WTC11 (cell line): ENCODE measurements at regions of chr2 and their contacts with region 1.

Region 1: DNA sequence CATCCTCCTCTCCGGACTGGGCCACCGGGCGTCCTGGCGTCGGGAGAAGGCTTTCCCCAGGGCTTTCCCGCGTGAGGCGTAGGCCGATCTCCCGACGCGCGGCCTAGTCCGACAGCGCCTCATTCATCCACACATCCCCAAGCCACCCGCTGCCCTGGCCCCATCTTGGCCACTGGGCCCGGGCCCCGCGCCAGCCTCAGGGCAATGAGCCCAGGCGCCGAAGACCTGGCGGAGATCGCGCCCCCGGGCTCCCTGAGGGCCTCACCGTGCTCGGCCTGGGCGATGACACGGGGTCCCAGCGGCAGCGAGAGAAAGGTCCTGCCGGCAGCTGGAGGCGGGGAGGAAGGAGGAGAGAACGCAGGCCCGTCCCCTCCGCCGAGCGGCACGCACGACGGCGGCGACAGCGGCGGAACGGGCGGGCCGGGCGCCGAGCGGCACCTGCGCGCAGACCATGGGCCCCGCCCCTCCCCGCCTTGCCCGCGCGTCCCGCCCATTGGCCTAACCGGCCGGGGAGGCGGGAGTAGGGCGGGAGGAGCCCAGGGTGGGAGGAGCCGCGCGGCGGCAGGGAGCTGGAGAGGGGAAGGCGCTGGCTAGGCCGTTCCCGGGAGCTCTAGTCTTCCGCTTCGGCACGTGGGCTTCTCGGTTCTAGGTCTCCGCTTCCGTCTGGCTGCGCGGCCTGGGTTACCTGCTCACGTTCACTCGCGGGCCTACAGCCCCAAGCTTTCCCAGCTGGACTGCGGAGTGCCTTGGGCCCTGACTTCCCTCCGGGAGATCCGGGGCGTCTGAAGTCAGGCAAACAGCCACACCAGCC is at the start of gene OLA1:
- DNase-seq: peak; percentile 98
- ATAC-seq: peak; percentile 97
- H3K4me3 Mint-ChIP-seq: peak within 1 kb of the TSS; percentile 76
- H3K27ac Mint-ChIP-seq: peak within 1 kb of the TSS; percentile 89
- H3K4me1 Mint-ChIP-seq: peaks cover 22% of the 10 kb centered on the region
- H3K27me3 Mint-ChIP-seq: peaks cover 17% of the 10 kb centered on the region
- CTCF ChIP-seq: no peak
- total RNA-seq, gene OLA1: 104 to 109 TPM (median 107 TPM) in 3 replicates

Region 2: DNA sequence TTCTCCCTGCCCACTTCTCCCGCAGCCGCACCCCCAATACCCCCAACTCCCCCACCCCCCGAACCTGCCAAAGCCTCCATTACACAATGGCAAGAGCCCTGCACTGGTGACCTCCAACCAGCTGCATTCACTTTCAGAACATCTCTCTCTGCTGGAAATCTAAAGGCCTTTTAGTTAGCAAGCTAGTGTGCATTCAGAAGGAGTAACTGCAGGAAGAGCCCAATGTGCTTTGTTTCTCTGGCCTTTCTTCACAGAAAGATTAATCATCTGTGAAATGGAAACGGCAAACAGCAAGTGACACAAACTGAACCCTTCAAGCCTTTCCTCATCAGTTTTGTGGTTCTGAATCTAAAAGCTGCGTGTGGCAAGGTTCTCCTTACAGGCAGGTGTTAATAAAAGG is 124.2 kb before region 1 on chr2:
- CTCF ChIA-PET with region 1: no interaction called
- POLR2A ChIA-PET with region 1: no interaction called
- DNase-seq: peak; percentile 31
- ATAC-seq: peak; percentile 94
- H3K4me3 Mint-ChIP-seq: peak overlapping the region; percentile 53
- H3K27ac Mint-ChIP-seq: peak overlapping the region; percentile 97
- H3K4me1 Mint-ChIP-seq: peaks cover 68% of the 10 kb centered on the region
- H3K27me3 Mint-ChIP-seq: no peaks in the 10 kb centered on the region
- CTCF ChIP-seq: no peak

Region 3: DNA sequence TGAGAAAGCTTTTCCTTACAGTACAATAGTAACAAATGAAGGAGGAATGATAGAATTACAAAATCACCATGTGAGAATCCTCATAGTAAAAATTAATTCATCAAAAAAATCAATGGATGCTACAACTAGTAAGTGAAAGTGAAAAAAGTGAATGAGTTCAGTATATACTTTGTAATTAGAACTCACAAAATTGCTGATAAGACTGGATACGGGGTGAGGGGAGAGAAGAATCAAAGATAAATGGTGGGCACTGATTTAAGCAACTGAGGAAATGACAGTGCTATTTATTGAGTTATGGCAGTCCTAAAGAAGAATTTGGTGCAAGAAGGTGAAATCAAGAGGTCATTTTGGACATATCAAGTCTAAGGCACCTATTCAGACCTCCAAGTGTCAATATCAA is 20.6 kb before region 1 on chr2:
- CTCF ChIA-PET with region 1: no interaction called
- POLR2A ChIA-PET with region 1: no interaction called
- DNase-seq: no peak
- ATAC-seq: no peak
- H3K4me3 Mint-ChIP-seq: no peak overlapping the region
- H3K27ac Mint-ChIP-seq: no peak overlapping the region
- H3K4me1 Mint-ChIP-seq: no peaks in the 10 kb centered on the region
- H3K27me3 Mint-ChIP-seq: no peaks in the 10 kb centered on the region; the same call in 1 of the 2 replicates
- CTCF ChIP-seq: no peak

Region 4: GRCh38 chr2:174326161-174327020 is 78.0 kb after region 1 on chr2:
- CTCF ChIA-PET with region 1: interaction called, 10 read pairs
- POLR2A ChIA-PET with region 1: no interaction called
- DNase-seq: peak; percentile 54
- ATAC-seq: peak; percentile 25
- H3K4me3 Mint-ChIP-seq: peak overlapping the region; percentile 87
- H3K27ac Mint-ChIP-seq: no peak overlapping the region
- H3K4me1 Mint-ChIP-seq: peaks cover 46% of the 10 kb centered on the region
- H3K27me3 Mint-ChIP-seq: peaks cover 91% of the 10 kb centered on the region
- CTCF ChIP-seq: no peak